ENCODE measurements at regions of chr17 and their contacts with region 1.

Region 1: GRCh38 chr17:5892921-5893675 is 177.1 kb upstream of the WSCD1 start:
- DNase-seq: peak in 2 of 10 donors; percentile 32 to 55
- H3K4me3 ChIP-seq: peak overlapping the region in 12 of 59 donors; percentile 11 to 40 (median 20)
- H3K27ac ChIP-seq: peak overlapping the region in 58 of 59 donors; percentile 41 to 96 (median 89)
- H3K27me3 ChIP-seq: peaks cover 0 to 22% (median 0%) of the 10 kb centered on the region in 45 donors
- CTCF ChIP-seq: peak in 3 of 56 donors; percentile 4 to 14 (median 10)

Region 2: DNA sequence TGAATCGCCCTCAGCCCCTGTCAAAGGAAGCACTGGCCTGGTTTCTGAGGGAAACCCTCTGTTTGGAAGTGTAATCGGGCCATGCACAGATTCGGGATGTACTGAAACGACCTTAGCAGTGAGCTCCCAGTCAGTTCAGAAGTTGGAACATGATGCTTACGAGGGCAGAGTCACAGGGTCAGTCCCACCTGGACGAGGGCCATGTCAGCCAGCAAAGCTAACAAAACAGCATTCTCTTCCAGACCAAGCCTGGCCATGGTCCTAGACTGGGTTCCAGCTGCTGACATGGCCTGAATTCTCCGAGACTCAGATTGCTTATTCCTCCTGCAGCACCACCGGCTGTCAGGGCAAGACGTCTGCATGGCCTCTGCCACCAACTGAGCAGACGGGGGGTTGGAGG is 15.2 kb before region 1 on chr17:
- intact Hi-C with region 1: loop called in 1 of 2 experiments (anchors 2 kb)
- DNase-seq: peak; percentile 46 to 95 (median 85)
- H3K4me3 ChIP-seq: peak overlapping the region in 9 of 59 donors; percentile 5 to 31 (median 15)
- H3K27ac ChIP-seq: peak overlapping the region in 53 of 59 donors; percentile 7 to 86 (median 67)
- H3K27me3 ChIP-seq: peaks cover 0 to 4% (median 0%) of the 10 kb centered on the region in 45 donors
- CTCF ChIP-seq: peak in 12 of 56 donors; percentile 13 to 41 (median 22)

Region 3: DNA sequence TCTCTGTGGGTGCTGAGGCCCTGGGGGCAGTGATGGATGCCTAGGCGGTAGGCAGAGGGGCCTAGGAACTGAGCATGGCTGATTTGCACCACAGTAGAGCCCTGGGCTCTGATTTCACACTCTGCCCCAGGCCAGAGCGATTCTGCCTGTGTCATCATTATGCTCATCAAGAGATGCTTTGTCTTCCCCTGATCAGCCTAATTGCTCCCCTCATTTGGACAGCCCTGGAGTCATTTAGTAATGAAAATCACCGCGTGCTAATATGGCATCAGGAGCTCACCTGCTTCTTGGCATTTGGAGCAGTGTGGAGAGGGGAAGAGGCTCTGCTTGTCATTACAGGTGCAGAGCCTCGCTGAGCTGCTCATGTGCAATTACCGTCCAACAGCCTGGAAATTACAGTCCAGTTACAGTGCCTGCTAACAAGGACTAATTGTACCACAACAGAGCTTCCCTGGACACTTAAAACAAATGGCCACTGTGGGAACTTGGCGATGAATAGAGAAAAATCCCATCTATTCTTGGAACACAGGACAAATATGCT is 20.0 kb after region 1 on chr17:
- intact Hi-C with region 1: loop called in 1 of 2 experiments (anchors 2 kb)
- DNase-seq: peak in 4 of 10 donors; percentile 9 to 61 (median 32)
- H3K4me3 ChIP-seq: no peak overlapping the region
- H3K27ac ChIP-seq: peak overlapping the region in 58 of 59 donors; percentile 27 to 96 (median 85)
- H3K27me3 ChIP-seq: peaks cover 0 to 5% (median 0%) of the 10 kb centered on the region in 45 donors
- CTCF ChIP-seq: peak in 3 of 56 donors; percentile 11 to 18 (median 16)